ENCODE measurements at regions of chr5 and their contacts with region 1.

Region 1: GRCh38 chr5:132866342-132867045 is at the starts of genes GDF9 and UQCRQ:
- DNase-seq: peak; percentile 93
- H3K4me3 Mint-ChIP-seq: peak within 1 kb of the TSS; percentile 95
- H3K27ac Mint-ChIP-seq: peak within 1 kb of the TSS; percentile 99
- H3K4me1 Mint-ChIP-seq: peaks cover 33% of the 10 kb centered on the region
- H3K27me3 Mint-ChIP-seq: no peaks in the 10 kb centered on the region
- total RNA-seq, gene GDF9: 0.32 and 0.57 TPM in 2 replicates
- total RNA-seq, gene UQCRQ: 410 and 425 TPM in 2 replicates

Region 2: GRCh38 chr5:132410451-132411381 is 455.8 kb before region 1 on chr5:
- intact Hi-C with region 1: loop called (anchors 2 kb)
- DNase-seq: peak; percentile 90
- H3K4me3 Mint-ChIP-seq: peak overlapping the region; percentile 99
- H3K27ac Mint-ChIP-seq: peak overlapping the region; percentile 100
- H3K4me1 Mint-ChIP-seq: peaks cover 81% of the 10 kb centered on the region
- H3K27me3 Mint-ChIP-seq: no peaks in the 10 kb centered on the region

Region 3: GRCh38 chr5:132526290-132526973 is 340.1 kb before region 1 on chr5:
- intact Hi-C with region 1: loop called (anchors 1 kb)
- DNase-seq: peak; percentile 48
- H3K4me3 Mint-ChIP-seq: no peak overlapping the region
- H3K27ac Mint-ChIP-seq: peak overlapping the region; percentile 26
- H3K4me1 Mint-ChIP-seq: peaks cover 64% of the 10 kb centered on the region
- H3K27me3 Mint-ChIP-seq: peaks cover under 1% of the 10 kb centered on the region

Region 4: DNA sequence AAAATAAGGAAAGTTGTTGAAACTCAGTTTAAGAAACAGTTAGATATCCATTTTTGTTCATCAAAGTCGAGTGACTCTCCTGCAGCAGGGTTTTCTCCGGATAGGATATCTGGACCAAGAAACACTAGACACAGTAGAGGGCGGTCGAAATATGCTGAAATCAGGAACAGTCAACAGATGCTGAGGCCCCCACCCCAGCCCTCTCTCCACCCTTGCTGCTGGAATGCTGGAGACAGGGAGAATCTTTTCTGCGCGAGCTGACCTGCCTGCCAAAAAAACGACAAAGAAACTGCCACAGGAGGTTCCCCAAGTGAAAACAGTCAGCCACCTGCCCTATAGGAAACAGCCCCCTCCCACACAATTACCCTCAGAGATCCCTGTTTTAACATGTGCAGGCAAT is 212.8 kb before region 1 on chr5:
- intact Hi-C with region 1: no loop called
- DNase-seq: no peak
- H3K4me3 Mint-ChIP-seq: peak overlapping the region; percentile 21
- H3K27ac Mint-ChIP-seq: no peak overlapping the region
- H3K4me1 Mint-ChIP-seq: peaks cover 47% of the 10 kb centered on the region
- H3K27me3 Mint-ChIP-seq: peaks cover 19% of the 10 kb centered on the region

Region 5: DNA sequence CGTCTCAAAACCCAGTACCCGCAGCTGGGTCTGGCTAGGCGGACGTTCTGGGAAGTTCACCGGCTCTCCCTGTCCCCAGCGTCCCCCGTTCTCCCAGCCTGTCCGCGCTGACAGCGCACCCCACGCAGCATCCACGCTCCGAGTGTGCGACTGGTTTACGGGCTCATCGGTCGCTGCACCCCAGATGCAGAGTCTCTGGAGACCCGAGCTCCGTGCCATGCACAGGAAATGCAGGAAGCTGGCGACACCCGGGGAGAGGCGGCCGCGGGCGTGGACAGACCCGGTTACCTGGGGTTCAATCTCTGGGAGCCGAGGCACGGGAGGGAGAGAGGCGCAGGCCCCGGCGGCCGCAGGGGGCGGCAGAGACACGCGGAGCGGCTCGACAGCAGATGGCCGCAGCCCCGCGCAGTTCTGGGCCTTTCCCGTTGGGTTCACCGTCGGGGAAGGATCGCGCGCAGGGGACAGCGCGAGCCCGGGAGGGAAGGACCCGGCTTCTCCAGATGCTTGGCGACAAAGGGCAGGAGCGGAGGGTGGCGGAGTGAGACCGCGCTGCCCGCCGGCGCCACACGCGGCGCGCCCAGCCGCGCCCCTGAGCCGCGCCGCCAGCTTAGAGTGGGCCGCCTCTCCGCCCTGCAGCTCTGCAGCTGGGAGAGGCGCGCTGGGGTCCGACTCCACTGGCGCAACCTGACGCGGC is 36.6 kb before region 1 on chr5:
- intact Hi-C with region 1: loop called (anchors 1 kb)
- DNase-seq: peak; percentile 66
- H3K4me3 Mint-ChIP-seq: peak overlapping the region; percentile 85
- H3K27ac Mint-ChIP-seq: peak overlapping the region; percentile 79
- H3K4me1 Mint-ChIP-seq: peaks cover 31% of the 10 kb centered on the region
- H3K27me3 Mint-ChIP-seq: peaks cover 56% of the 10 kb centered on the region

Region 6: GRCh38 chr5:133025804-133026663 is 159.5 kb after region 1 on chr5 and contains the start of gene ZCCHC10:
- intact Hi-C with region 1: loop called (anchors 2 kb)
- DNase-seq: peak; percentile 89
- H3K4me3 Mint-ChIP-seq: peak within 1 kb of the TSS; percentile 90
- H3K27ac Mint-ChIP-seq: peak within 1 kb of the TSS; percentile 93
- H3K4me1 Mint-ChIP-seq: peaks cover 23% of the 10 kb centered on the region
- H3K27me3 Mint-ChIP-seq: peaks cover 4% of the 10 kb centered on the region
- total RNA-seq, gene ZCCHC10: 37.6 and 41.7 TPM in 2 replicates

Measured in activated T-helper 1 cell treated with anti-CD3 and anti-CD28 coated beads, Interleukin-12 subunit alpha, Interleukin-12 subunit beta, Interleukin-2, Interleukin-4 antibody, amounts not matched to agents 30 ng/mL and 10 ng/mL and 1 ng/mL, durations not matched to agents 14 hours and 24 hours and 36 hours (primary cell).